ENCODE measurements at regions of chr17 and their contacts with region 1.

Region 1: DNA sequence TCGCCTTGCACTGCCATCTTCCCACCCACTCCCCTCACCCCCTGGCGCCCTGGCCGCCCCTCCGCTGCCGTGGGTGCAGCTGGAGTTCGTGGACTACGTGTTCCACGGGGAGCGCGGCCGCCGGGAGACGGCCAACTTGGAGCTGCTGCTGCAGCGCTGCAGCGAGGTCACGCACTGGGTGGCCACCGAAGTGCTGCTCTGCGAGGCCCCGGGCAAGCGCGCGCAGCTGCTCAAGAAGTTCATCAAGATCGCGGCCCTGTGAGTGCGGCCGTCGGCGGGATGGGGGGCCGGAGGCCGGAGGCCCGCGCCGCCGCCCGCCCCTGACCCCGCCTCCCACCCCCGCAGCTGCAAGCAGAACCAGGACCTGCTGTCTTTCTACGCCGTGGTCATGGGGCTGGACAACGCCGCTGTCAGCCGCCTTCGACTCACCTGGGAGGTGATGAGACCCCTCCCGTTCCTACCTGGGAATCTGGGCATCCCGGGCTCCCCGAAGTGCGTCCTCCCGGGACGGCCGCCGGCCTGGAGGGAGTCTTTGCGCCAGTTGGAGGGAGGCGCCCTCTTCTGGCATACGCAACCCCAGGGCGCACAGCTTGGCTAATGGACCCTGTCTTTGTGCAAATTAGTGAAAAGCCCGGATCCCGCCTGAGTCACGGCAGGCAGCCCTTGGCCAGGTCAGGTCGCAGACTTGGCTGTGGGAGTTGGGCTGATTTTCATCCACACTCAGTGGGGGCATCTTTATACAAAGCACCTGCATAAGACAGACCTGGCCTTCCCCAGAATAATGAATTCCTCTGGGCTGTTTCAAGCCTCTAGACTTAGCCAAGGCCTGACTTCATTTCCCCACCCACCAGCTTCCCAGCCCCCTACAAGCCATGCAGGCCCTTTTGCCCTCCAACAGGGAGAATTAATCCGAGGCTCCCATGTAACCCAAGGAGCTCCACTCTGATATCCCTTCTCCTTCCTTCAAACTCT is 14.3 kb downstream of the RAPGEFL1 start:
- DNase-seq: peak; percentile 85
- ATAC-seq: peak; percentile 83

Region 2: DNA sequence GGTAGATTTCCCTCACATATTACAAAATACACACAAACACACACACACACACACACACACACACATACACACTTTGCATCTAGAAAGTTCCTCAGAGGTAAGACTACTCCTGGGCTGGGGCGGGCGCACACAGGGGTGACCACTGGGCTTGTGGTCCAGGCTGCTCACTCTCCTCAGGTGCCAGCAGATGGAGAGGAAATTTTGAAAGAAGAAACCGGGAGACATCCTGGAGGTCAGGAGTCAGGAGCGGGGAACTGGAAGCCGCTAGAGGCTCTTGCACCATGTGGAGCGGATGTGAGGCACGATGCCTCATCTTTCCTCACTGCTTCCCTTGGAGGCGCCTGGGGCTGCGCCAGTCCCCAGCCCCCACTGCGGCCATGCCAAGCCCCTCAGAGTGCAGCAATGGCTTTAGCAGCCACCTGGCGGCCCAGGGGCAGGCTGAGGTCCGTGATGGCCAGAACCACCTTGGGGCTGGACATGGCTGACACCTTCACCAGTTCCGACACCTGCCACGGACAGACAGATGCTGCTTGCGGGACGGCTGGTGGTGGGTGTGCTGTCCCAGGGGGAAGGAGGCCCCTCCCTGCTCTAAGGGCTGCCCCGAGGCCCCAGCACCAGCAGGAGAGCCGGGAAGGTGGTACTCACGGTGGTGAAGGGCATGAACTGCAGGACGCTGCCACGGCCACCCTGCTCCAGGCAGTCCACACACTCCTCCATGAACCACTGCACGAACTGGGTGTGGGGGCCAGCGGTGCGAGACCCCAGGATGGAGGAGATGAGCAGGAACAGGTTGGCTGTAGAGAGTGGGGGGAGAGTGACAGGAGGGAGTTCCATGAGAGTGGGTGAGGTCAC is 172.2 kb before region 1 on chr17:
- intact Hi-C with region 1: loop called (anchors 10 kb)
- DNase-seq: no peak
- ATAC-seq: peak; percentile 68

Region 3: GRCh38 chr17:40075201-40075941 is 116.2 kb before region 1 on chr17:
- intact Hi-C with region 1: no loop called
- DNase-seq: peak; percentile 88
- ATAC-seq: peak; percentile 67